ENCODE measurements at regions of chr11 and their contacts with region 1.

Region 1: DNA sequence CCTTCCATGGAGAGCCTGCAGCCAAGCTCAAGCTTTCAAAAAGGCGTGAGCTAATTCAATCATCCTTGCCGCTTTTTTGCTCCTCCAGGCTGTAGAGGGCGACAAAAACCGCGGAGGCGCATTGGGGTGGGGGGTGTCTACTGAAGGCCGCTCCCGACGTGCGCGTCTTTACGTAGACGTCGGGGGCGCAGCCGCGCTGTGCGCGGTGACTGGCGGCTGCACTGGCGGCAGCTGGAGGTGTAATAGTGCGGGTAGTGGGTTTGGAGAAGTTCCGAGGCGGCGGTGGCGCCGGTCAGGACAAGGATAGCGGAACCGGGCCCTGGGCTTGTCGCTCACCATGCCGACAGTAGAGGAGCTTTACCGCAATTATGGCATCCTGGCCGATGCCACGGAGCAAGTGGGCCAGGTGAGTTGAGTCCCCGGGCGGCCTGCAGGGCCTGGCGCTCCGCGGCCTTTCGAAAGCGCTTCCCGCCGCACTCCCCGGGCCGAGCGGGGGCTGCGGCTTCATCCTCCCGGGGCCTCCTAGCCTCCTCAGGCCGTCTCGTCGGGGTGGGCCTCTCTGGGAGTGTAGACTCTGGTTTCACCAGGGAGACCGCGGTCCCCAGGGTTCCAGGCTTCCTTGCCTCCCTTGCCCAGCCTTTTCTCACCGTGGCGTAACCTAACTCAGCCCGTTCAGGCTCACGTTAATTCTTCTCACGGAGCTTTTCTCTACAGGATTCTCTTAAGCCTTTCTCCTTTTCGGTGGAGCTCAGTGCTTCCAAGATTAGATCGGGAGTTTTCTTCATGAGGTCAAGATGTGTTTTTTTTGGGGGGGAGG is at the start of gene API5:
- DNase-seq: peak; percentile 79 to 94 (median 92)
- ATAC-seq: peak; percentile 99
- H3K4me3 ChIP-seq: peak within 1 kb of the TSS; percentile 60
- H3K4me3 Mint-ChIP-seq: peak within 1 kb of the TSS; percentile 90 to 99 (median 98)
- H3K27ac ChIP-seq: peak within 1 kb of the TSS; percentile 89
- H3K27ac Mint-ChIP-seq: peak within 1 kb of the TSS; percentile 86 to 98 (median 96)
- H3K4me1 ChIP-seq: peaks cover 20 to 25% of the 10 kb centered on the region in 2 donors
- H3K4me1 Mint-ChIP-seq: peaks cover 30 to 56% (median 51%) of the 10 kb centered on the region in 7 donors
- H3K27me3 ChIP-seq: no peaks in the 10 kb centered on the region
- H3K27me3 Mint-ChIP-seq: peaks cover 0 to 2% (median 0%) of the 10 kb centered on the region in 5 donors
- total RNA-seq, gene API5: 59.8 to 138 (median 91.2) TPM

Region 2: DNA sequence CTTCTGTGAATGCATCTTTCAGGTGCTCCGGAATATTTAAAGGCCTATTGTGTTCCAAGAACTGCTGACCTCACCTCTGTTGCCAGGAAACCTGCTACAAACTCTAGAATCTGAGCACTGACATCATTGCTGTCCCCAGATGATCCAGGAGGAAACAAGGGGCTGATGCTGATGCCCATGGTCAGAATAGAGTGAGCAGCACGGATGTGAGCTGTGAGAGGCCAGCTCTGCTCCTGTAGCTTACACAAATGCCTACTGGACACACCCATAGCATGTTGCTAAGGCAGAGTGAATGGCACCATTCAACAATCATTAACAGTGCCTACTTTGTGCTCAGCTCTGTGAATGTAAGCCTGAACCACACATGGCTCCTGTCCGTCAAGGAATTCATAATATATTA is 276.9 kb before region 1 on chr11:
- CTCF ChIA-PET with region 1: no interaction called
- POLR2A ChIA-PET with region 1: no interaction called
- intact Hi-C with region 1: no loop called
- DNase-seq: no peak
- ATAC-seq: no peak
- H3K4me3 ChIP-seq: no peak overlapping the region
- H3K4me3 Mint-ChIP-seq: no peak overlapping the region
- H3K27ac ChIP-seq: no peak overlapping the region
- H3K27ac Mint-ChIP-seq: no peak overlapping the region
- H3K4me1 ChIP-seq: no peaks in the 10 kb centered on the region
- H3K4me1 Mint-ChIP-seq: no peaks in the 10 kb centered on the region
- H3K27me3 ChIP-seq: no peaks in the 10 kb centered on the region
- H3K27me3 Mint-ChIP-seq: peaks cover 0 to 6% (median 0%) of the 10 kb centered on the region in 5 donors

Region 3: GRCh38 chr11:43358801-43359421 is 46.9 kb after region 1 on chr11 and contains the start of gene TTC17:
- CTCF ChIA-PET with region 1: interaction called, 7 read pairs
- POLR2A ChIA-PET with region 1: interaction called, 43 read pairs
- intact Hi-C with region 1: loop called (anchors 1 kb)
- DNase-seq: peak; percentile 83 to 94 (median 90)
- ATAC-seq: peak; percentile 98
- H3K4me3 ChIP-seq: peak within 1 kb of the TSS; percentile 57
- H3K4me3 Mint-ChIP-seq: peak within 1 kb of the TSS; percentile 95 to 100 (median 98)
- H3K27ac ChIP-seq: peak within 1 kb of the TSS; percentile 88
- H3K27ac Mint-ChIP-seq: peak within 1 kb of the TSS; percentile 92 to 99 (median 98)
- H3K4me1 ChIP-seq: peaks cover 24 to 27% of the 10 kb centered on the region in 2 donors
- H3K4me1 Mint-ChIP-seq: peaks cover 24 to 60% (median 54%) of the 10 kb centered on the region in 7 donors
- H3K27me3 ChIP-seq: no peaks in the 10 kb centered on the region
- H3K27me3 Mint-ChIP-seq: no peaks in the 10 kb centered on the region
- total RNA-seq, gene TTC17: 85.2 to 132 (median 102) TPM

Region 4: GRCh38 chr11:43419460-43419859 is 107.5 kb after region 1 on chr11:
- CTCF ChIA-PET with region 1: no interaction called
- POLR2A ChIA-PET with region 1: no interaction called
- intact Hi-C with region 1: loop called in 1 of 2 experiments (anchors 1 kb)
- DNase-seq: peak in 6 of 9 donors; percentile 1 to 23 (median 8)
- ATAC-seq: no peak
- H3K4me3 ChIP-seq: no peak overlapping the region
- H3K4me3 Mint-ChIP-seq: no peak overlapping the region
- H3K27ac ChIP-seq: no peak overlapping the region
- H3K27ac Mint-ChIP-seq: no peak overlapping the region
- H3K4me1 ChIP-seq: no peaks in the 10 kb centered on the region
- H3K4me1 Mint-ChIP-seq: peaks cover 0 to 3% (median 0%) of the 10 kb centered on the region in 7 donors
- H3K27me3 ChIP-seq: no peaks in the 10 kb centered on the region
- H3K27me3 Mint-ChIP-seq: no peaks in the 10 kb centered on the region

Region 5: GRCh38 chr11:43680521-43681400 is 368.8 kb after region 1 on chr11 and contains the start of gene HSD17B12:
- CTCF ChIA-PET with region 1: no interaction called
- POLR2A ChIA-PET with region 1: interaction called, 5 read pairs
- intact Hi-C with region 1: loop called (anchors 1 kb)
- DNase-seq: peak; percentile 91 to 100 (median 99)
- ATAC-seq: peak; percentile 99
- H3K4me3 ChIP-seq: peak within 1 kb of the TSS; percentile 81
- H3K4me3 Mint-ChIP-seq: peak within 1 kb of the TSS; percentile 85 to 99 (median 96)
- H3K27ac ChIP-seq: peak within 1 kb of the TSS; percentile 89
- H3K27ac Mint-ChIP-seq: peak within 1 kb of the TSS; percentile 84 to 98 (median 97)
- H3K4me1 ChIP-seq: peaks cover 4 to 8% of the 10 kb centered on the region in 2 donors
- H3K4me1 Mint-ChIP-seq: peaks cover 11 to 59% (median 43%) of the 10 kb centered on the region in 7 donors
- H3K27me3 ChIP-seq: no peaks in the 10 kb centered on the region
- H3K27me3 Mint-ChIP-seq: peaks cover 0 to 14% (median 2%) of the 10 kb centered on the region in 5 donors
- total RNA-seq, gene HSD17B12: 21.1 to 39.5 (median 24.7) TPM

Region 6: GRCh38 chr11:43868852-43869567 is 557.0 kb after region 1 on chr11:
- CTCF ChIA-PET with region 1: no interaction called
- POLR2A ChIA-PET with region 1: no interaction called
- intact Hi-C with region 1: loop called in 1 of 2 experiments (anchors 5 kb)
- DNase-seq: peak in 4 of 9 donors; percentile 8 to 58 (median 12)
- ATAC-seq: peak; percentile 99
- H3K4me3 ChIP-seq: peak overlapping the region; percentile 12
- H3K4me3 Mint-ChIP-seq: peak overlapping the region; percentile 2 to 65 (median 58)
- H3K27ac ChIP-seq: no peak overlapping the region
- H3K27ac Mint-ChIP-seq: peak overlapping the region in 5 of 9 donors; percentile 28 to 82 (median 62)
- H3K4me1 ChIP-seq: peaks cover 8 to 17% of the 10 kb centered on the region in 2 donors
- H3K4me1 Mint-ChIP-seq: peaks cover 8 to 27% (median 11%) of the 10 kb centered on the region in 7 donors
- H3K27me3 ChIP-seq: no peaks in the 10 kb centered on the region
- H3K27me3 Mint-ChIP-seq: peaks cover 21 to 68% (median 24%) of the 10 kb centered on the region in 5 donors

Region 7: GRCh38 chr11:44065841-44066731 is 754.1 kb after region 1 on chr11 and contains the start of gene ACCS:
- CTCF ChIA-PET with region 1: no interaction called
- POLR2A ChIA-PET with region 1: no interaction called
- intact Hi-C with region 1: loop called in 1 of 2 experiments (anchors 1 kb)
- DNase-seq: peak; percentile 80 to 91 (median 88)
- ATAC-seq: peak; percentile 98
- H3K4me3 ChIP-seq: peak within 1 kb of the TSS; percentile 88
- H3K4me3 Mint-ChIP-seq: peak within 1 kb of the TSS; percentile 79 to 97 (median 94)
- H3K27ac ChIP-seq: peak within 1 kb of the TSS; percentile 87
- H3K27ac Mint-ChIP-seq: peak within 1 kb of the TSS; percentile 84 to 97 (median 94)
- H3K4me1 ChIP-seq: peaks cover 6 to 12% of the 10 kb centered on the region in 2 donors
- H3K4me1 Mint-ChIP-seq: peaks cover 12 to 53% (median 26%) of the 10 kb centered on the region in 7 donors
- H3K27me3 ChIP-seq: no peaks in the 10 kb centered on the region
- H3K27me3 Mint-ChIP-seq: no peaks in the 10 kb centered on the region
- total RNA-seq, gene ACCS: 25.1 to 79.2 (median 57.6) TPM

Measured in naive thymus-derived CD4-positive, alpha-beta T cell (primary cell).